H1 (cell line): ENCODE measurements at regions of chr7 and their contacts with region 1.

Region 1: DNA sequence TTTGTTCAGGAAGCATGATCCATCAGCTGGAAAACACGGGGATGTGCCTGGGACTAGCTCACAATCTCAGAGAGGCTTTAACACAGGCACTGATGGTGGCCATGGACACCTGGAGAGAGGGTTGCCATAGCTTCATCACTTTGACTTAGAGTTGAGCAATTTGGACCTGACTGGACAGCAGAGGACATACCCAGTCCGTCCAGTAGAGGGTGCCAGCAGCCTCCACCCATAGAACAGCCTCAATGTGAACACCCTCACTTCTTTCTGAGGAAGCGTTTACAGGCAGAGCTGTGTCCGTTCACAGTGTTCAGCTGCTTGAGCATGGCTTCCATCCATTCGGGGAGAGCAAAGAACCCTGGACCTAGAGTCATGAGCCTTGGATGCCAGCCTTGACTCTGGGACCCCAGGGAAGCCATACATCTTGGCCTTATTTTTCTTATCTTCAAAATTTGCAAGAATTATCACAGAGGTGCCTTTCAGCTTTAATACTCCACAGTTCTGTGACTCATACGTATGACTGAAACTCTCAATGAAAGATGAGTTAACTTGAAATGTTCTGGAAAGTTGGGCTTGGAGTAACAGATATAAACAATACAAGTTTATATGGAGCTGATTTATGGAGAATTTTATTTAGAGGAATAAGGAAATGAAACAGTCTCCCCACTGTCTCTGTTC is 302.9 kb upstream of the PODXL start:
- DNase-seq: peak; percentile 38 to 88
- H3K4me3 ChIP-seq: no peak overlapping the region
- H3K27ac ChIP-seq: no peak overlapping the region
- H3K4me1 ChIP-seq: no peaks in the 10 kb centered on the region
- H3K27me3 ChIP-seq: no peaks in the 10 kb centered on the region
- CTCF ChIP-seq: peak; percentile 86 to 98 (median 91)
- EP300 ChIP-seq: no peak
- POLR2A ChIP-seq: no peak
- RAD21 ChIP-seq: peak; percentile 90 to 92

Region 2: DNA sequence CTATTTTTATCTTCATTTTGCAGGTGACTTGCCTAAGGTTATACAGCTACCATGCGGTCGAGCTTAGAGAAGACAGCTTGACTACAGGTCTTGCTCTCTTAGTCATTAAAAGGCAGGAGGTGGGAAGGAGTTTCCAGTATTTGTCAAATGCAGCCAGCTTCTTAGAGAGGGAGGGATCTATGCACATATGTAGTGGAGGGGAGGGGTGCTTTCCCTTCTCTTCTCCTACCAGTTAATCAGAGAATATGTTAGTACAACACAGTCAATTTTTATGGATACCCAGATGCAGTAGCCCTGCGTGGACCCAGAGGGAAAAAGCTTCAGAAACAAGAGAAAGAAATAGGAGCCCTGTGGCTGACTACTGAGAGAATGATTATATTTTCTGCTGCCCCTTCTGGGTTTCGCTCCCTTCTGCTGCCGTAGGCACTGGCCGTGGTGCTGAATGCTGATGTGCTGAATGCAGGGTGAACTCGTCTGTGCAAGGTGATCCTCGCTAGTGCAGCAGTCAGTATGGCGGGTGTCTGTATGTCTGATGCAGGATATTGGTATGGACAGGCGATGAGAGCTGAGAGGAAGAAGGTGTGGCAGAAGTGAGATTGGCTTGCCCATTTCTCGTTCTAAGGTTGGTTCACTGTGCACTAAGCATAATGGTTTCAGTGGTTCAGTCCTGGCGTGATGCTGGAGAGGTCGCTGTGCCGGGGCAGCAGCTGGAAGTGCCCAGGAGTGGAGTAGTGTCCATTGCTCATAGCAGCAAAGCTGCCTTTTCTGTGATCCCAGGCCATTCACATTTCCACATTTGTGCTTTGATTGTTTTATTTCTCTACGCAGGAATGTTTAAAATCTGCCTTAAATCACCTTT is 113.7 kb before region 1 on chr7:
- CTCF ChIA-PET with region 1: interaction called, 18 read pairs
- POLR2A ChIA-PET with region 1: no interaction called
- DNase-seq: peak in 1 of 2 experiments; percentile 86
- H3K4me3 ChIP-seq: no peak overlapping the region
- H3K27ac ChIP-seq: no peak overlapping the region
- H3K4me1 ChIP-seq: peaks cover 0 to 7% (median 0%) of the 10 kb centered on the region in 4 experiments; a peak in 1 of 7 replicates
- H3K27me3 ChIP-seq: no peaks in the 10 kb centered on the region
- CTCF ChIP-seq: no peak
- EP300 ChIP-seq: no peak
- POLR2A ChIP-seq: no peak
- RAD21 ChIP-seq: 0 out of 4 replicates have a peak, but pooled peaks of 1 of the 2 experiments have one; percentile 2

Region 3: DNA sequence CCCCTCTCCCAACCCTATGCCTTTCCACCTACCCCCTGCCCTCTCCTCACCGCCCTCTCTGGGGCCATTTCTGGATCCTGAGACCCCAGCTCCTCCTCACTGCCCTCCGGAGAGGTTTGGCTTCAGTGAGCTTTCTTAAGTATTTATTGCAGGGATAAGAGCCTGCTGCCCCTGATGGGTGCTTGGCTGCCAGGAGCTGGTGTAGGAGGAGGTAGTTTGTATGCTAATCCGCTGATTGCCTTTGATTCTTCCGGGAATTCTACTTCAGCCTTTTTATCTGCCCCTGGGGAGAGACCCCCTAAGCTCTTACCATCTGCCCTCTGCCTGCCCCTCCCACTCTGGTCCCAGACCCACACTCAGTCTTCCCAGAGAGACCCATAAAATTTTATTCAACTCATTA is 39.4 kb before region 1 on chr7:
- CTCF ChIA-PET with region 1: interaction called, 20 read pairs
- POLR2A ChIA-PET with region 1: no interaction called
- DNase-seq: no peak
- H3K4me3 ChIP-seq: no peak overlapping the region
- H3K27ac ChIP-seq: no peak overlapping the region
- H3K4me1 ChIP-seq: peaks cover 0 to 5% (median 1%) of the 10 kb centered on the region in 4 experiments; a peak in 2 of 7 replicates
- H3K27me3 ChIP-seq: no peaks in the 10 kb centered on the region
- CTCF ChIP-seq: no peak
- EP300 ChIP-seq: no peak
- POLR2A ChIP-seq: no peak
- RAD21 ChIP-seq: no peak

Region 4: GRCh38 chr7:131843898-131844331 is 15.4 kb before region 1 on chr7:
- CTCF ChIA-PET with region 1: interaction called, 60 read pairs
- POLR2A ChIA-PET with region 1: interaction called, 5 read pairs
- DNase-seq: no peak
- H3K4me3 ChIP-seq: no peak overlapping the region
- H3K27ac ChIP-seq: no peak overlapping the region
- H3K4me1 ChIP-seq: 0 out of 7 replicates have a peak, but pooled peaks cover 0 to 2% (median 0%) of the 10 kb centered on the region in 4 experiments
- H3K27me3 ChIP-seq: no peaks in the 10 kb centered on the region; a peak in 1 of 7 replicates
- CTCF ChIP-seq: no peak
- EP300 ChIP-seq: no peak
- POLR2A ChIP-seq: no peak
- RAD21 ChIP-seq: no peak

Region 5: DNA sequence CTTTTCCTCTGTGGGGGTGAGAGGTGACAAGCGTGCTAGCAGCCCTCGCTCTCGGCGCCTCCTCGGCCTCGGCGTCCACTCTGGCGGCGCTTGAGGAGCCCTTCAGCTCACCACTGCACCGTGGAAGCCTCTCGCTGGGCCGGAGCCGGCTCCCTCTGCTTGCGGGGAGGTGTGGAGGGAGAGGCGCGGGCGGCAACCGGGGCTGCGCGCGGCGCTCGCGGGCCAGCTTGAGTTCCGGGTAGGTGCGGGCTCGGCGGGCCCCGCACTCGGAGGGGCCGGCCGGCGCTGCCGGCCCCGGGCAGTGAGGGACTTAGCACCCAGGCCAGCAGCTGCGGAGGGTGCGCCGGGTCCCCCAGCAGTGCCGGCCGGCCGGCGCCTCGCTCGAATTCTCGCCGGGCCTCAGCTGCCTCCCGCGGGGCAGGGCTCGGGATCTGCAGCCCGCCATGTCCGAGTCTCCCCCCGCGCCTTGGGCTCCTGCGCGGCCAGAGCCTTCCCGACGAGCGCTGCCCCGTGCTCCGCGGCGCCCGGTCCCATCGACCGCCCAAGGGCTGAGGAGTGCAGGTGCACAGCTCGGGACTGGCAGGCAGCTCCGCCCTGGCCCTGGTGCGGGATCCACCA is 50.0 kb after region 1 on chr7:
- CTCF ChIA-PET with region 1: interaction called, 47 read pairs
- POLR2A ChIA-PET with region 1: no interaction called
- DNase-seq: peak in 1 of 2 experiments; percentile 42
- H3K4me3 ChIP-seq: peak overlapping the region; percentile 26 to 57 (median 34)
- H3K27ac ChIP-seq: no peak overlapping the region
- H3K4me1 ChIP-seq: no peaks in the 10 kb centered on the region
- H3K27me3 ChIP-seq: peaks cover 10 to 32% (median 27%) of the 10 kb centered on the region in 4 experiments
- CTCF ChIP-seq: no peak
- EP300 ChIP-seq: no peak
- POLR2A ChIP-seq: no peak
- RAD21 ChIP-seq: no peak

Region 6: DNA sequence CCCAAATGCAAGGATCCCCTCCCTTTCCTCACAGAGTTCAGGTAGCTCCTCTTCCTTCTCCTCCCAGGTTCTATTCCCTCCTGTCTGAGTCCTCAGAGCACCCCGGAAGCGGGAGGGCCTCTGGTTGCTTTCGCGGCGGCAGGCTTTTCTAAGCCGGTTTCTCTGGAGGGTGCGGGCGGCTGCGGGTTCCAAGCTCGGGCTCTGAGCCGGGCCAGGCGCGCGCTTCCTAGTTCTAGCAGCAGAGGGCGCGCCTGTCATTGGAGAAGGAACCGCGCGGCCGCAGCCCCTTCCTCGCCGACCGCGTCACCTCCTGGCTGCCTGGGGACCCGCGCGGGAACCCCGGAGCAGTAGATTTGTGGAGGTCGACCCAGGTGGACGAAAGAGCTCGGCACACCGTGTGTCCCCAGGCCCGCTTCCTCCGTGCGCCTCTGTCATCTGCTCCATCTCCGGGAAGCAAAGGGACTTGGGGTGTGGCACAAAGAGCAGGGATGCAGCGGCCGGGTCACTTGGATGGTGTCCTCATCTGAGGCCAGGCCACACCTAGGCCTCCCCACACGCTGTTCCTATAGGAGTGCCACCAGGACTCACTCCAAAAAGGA is 86.1 kb after region 1 on chr7:
- CTCF ChIA-PET with region 1: interaction called, 41 read pairs
- POLR2A ChIA-PET with region 1: no interaction called
- DNase-seq: peak; percentile 46 to 90
- H3K4me3 ChIP-seq: peak overlapping the region in 1 of 4 experiments; percentile 33; a peak in 3 of 8 replicates
- H3K27ac ChIP-seq: no peak overlapping the region
- H3K4me1 ChIP-seq: no peaks in the 10 kb centered on the region; a peak in 1 of 7 replicates
- H3K27me3 ChIP-seq: peaks cover 0 to 14% (median 6%) of the 10 kb centered on the region in 4 experiments; a peak in 3 of 7 replicates
- CTCF ChIP-seq: peak; percentile 69 to 98 (median 81)
- EP300 ChIP-seq: no peak; a peak in 1 of 3 replicates
- POLR2A ChIP-seq: no peak
- RAD21 ChIP-seq: peak; percentile 97 to 99